ENCODE measurements at regions of chr12 and their contacts with region 1.

Region 1: GRCh38 chr12:44015335-44015941 is 179.6 kb downstream of the TMEM117 start:
- DNase-seq: peak; percentile 16
- H3K4me3 ChIP-seq: no peak overlapping the region
- CTCF ChIP-seq: peak; percentile 41

Region 2: DNA sequence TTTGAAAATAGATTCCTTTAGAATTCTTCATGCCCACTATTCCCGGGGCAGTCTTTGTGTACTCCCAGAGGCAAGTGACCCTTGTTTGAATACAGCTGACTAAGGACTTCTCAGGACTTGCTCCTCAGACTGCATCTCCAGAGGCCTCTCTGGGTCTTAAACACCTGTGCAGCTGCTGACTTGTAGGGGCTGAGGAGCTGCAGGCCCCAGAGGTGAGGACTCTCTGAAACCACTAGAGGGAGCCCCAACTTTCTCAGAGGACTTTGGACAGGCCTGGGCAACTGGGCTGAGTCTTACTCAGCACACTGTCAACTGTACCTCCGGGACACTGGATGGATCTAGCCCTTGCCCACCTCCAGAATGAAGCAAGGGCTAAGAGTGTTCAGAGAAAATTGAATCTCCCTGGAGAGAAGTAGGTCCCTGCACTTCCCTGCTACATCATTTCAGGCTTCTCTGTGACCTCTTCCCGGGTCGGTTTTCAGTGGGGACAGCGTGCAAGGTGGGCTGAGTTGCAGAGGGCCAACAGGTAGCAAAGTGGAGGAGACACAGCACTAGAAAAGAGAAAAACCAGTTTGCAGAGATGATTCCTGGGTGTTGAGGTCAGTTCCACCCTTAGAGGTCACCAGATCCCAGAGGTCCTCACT is 15.0 kb before region 1 on chr12:
- CTCF ChIA-PET with region 1: interaction called, 18 read pairs
- POLR2A ChIA-PET with region 1: no interaction called
- DNase-seq: no peak
- H3K4me3 ChIP-seq: no peak overlapping the region
- CTCF ChIP-seq: peak; percentile 65

Measured in AG04449 (cell line).